Ascending aorta (tissue), 2 donors: ENCODE measurements at regions of chr16 and their contacts with region 1.

Region 1: DNA sequence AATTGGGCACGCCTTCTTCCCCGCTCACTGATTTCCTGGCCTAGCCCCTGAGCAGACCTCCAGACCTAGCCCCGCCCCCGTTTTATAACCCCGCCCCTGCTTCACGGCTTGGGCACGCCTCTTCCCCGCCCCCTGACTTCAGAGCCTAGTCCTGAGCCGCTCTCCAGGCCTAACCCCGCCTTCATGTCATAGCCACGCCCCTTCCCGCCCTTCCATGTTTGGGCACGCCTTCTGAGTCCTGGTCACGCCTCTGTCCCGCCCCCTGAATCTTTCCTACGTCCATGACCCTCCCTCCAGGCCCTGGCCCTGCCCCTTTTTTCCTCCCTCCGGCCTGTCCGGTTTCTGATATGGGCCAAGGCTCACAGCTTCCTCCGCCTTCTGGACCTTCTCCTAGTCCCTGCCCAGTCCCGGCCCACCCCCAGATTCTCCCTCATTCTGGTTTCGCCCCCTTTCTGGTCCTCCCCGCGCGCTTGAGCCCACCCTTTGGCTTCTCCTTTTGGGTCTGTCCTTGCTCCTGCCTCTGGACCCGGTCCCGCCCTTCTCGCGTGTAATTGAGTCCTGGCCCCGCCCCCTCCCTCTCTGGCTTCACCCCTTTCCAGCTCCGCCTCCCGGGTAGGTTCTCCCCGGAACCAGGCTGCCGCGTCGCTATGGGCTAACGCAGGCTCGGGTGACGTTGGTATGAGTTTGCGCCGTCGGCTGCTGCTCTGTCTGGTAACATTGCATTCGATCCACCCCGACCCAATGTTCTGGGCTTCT is 15.1 kb upstream of the EEF2K start:
- DNase-seq: peak; percentile 99 to 100
- H3K4me3 ChIP-seq: peak overlapping the region; percentile 58 to 64
- H3K27ac ChIP-seq: peak overlapping the region; percentile 95 to 98
- H3K4me1 ChIP-seq: peaks cover 9 to 20% of the 10 kb centered on the region in 2 donors
- H3K27me3 ChIP-seq: no peaks in the 10 kb centered on the region
- CTCF ChIP-seq: no peak

Region 2: DNA sequence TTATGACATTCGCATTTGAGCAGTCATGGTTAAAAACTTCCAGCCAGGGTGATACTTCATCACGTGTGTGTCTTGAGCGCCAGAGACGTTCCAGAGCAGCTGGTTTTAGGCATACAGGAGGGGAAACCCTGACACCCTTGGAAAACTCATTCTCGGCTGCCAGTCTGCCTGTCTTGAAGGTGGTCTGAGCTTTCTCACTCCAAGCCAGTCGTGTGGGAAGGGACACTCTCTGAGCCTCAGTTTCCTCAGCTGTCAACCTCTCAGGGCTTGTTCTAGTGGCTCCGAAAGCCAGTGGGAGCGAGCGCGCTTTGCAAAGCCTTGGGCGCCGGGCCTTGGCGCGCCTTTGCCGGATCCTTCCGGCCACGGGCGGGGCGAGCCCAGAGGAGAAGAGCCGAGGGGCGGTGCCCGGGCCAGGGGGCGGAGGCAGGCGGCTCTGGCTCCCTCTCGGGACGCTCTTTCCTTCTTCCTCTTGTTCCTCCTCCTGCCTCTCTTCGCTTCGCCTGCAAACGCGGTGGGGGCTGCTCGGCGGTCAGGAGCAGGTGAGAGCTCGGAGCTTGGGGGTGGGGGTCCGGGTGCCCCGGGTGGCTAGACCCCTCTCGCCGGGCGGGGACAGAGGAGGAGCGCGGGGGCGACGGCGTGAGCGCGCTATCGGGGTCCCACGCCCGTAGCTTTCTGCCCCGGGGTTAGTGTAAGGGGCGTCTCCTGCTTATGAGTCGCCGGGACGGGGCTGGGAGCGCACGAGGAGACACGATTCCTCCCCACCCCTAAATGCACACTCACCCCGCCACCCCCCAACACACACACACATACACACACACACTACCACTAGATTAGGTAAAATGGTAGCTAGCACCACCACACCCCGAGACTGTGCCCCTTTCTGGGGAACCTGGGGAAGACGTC is 1032.5 kb before region 1 on chr16 and contains the start of gene LDAF1:
- intact Hi-C with region 1: loop called (anchors 10 kb)
- DNase-seq: peak; percentile 28 to 91
- H3K4me3 ChIP-seq: peak within 1 kb of the TSS; percentile 85 to 87
- H3K27ac ChIP-seq: peak within 1 kb of the TSS; percentile 87 to 91
- H3K4me1 ChIP-seq: peaks cover 15 to 22% of the 10 kb centered on the region in 2 donors
- H3K27me3 ChIP-seq: no peaks in the 10 kb centered on the region
- CTCF ChIP-seq: no peak
- total RNA-seq, gene LDAF1: 23.5 TPM

Region 3: GRCh38 chr16:21952793-21953540 is 238.0 kb before region 1 on chr16 and contains the start of gene UQCRC2:
- intact Hi-C with region 1: loop called (anchors 1 kb)
- DNase-seq: peak; percentile 48 to 92
- H3K4me3 ChIP-seq: peak within 1 kb of the TSS; percentile 84 to 87
- H3K27ac ChIP-seq: peak within 1 kb of the TSS; percentile 92 to 94
- H3K4me1 ChIP-seq: peaks cover 6 to 20% of the 10 kb centered on the region in 2 donors
- H3K27me3 ChIP-seq: no peaks in the 10 kb centered on the region
- CTCF ChIP-seq: peak in 1 of 3 experiments; percentile 2
- total RNA-seq, gene UQCRC2: 66.3 TPM

Region 4: GRCh38 chr16:22206013-22206841 is 15.3 kb after region 1 on chr16 and contains the start of gene EEF2K:
- intact Hi-C with region 1: loop called (anchors 1 kb)
- DNase-seq: peak; percentile 79 to 97
- H3K4me3 ChIP-seq: peak within 1 kb of the TSS; percentile 74 to 85
- H3K27ac ChIP-seq: peak within 1 kb of the TSS; percentile 87 to 88
- H3K4me1 ChIP-seq: peaks cover 3 to 44% of the 10 kb centered on the region in 2 donors
- H3K27me3 ChIP-seq: no peaks in the 10 kb centered on the region
- CTCF ChIP-seq: peak; percentile 70 to 98 (median 84)
- total RNA-seq, gene EEF2K: 31.9 TPM

Region 5: DNA sequence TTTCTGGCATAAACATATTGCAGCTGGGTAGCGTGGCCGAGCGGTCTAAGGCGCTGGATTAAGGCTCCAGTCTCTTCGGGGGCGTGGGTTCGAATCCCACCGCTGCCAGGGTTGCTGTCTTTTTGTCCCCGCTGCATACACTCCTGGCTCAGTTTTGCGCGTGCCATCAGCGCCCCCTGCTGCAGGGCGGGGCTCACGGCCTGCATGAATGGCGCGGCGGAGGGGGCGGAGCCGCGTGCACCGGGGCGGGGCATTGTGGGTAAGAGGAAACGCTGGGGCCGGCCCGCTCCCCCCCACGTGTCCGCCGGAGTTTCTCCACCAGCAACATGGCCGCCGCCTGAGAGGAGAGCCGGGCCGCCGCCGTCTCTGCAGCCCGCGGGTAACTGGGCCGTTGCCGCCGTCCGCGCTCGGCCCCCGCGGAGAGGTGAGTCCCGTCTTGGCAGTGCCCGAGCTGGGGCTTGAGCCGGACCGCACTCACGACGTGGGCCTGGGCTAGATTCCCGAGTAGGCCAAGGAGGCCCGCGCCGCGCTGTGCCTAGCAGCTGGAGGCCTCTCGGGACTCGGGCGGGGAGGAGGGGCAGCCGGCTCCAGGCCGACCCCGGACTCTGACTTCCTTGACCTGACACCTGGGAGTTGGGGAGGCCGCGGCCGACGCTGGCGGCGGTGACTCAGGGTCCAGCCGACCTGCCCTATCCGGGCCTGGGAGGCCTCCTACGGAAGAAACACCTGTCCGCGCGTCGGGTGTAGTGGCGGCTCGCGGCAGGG is 106.3 kb after region 1 on chr16 and contains the start of gene POLR3E:
- intact Hi-C with region 1: loop called (anchors 2 kb)
- DNase-seq: peak; percentile 98 to 100
- H3K4me3 ChIP-seq: peak within 1 kb of the TSS; percentile 83 to 93
- H3K27ac ChIP-seq: peak within 1 kb of the TSS; percentile 94 to 97
- H3K4me1 ChIP-seq: peaks cover 3% of the 10 kb centered on the region in 2 donors
- H3K27me3 ChIP-seq: no peaks in the 10 kb centered on the region
- CTCF ChIP-seq: peak; percentile 93 to 99 (median 94)
- total RNA-seq, gene POLR3E: 19.5 TPM

Region 6: DNA sequence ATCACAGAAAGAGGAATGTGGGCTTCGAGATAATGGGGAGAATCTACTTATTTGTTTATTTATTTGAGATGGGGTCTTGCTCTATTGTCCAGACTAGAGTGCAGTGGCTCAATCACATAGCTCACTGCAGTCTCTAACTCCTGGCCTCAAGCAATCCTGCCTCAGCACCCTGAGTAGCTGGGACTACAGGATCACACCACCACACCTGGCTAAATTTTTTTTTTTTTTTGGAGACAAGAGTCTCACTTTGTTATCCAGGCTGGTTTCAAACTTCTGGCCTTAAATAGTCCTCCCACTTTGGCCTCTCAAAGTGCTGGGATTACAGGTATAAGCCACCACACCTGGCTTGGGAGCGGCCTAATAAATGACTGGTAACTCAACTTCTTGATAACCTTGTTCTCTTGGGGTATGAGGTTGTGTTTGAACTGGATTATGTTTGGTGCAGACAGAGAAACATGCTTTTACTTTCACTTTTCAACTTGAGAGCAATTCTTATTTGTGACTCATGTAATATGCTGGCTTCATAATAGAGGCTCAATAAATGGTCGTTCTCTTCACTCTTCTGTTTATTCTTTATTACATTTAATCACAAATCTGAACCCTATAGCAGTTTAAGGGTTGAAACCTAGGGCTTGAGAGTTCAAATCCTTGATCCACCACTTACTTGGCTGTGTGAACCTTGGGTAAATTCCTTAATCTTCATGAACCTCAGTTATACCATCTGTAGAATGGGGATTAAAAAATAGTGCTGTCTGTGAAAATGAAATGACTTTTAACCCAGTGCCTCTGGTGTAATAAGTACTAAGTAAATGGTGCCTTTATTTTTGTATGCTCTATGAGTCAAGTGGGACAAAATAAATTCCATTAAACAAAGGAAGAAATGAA is 493.9 kb after region 1 on chr16:
- intact Hi-C with region 1: loop called (anchors 2 kb)
- DNase-seq: peak in 1 of 2 donors; percentile 64
- H3K4me3 ChIP-seq: no peak overlapping the region
- H3K27ac ChIP-seq: peak overlapping the region; percentile 67 to 71
- H3K4me1 ChIP-seq: peaks cover 7 to 16% of the 10 kb centered on the region in 2 donors
- H3K27me3 ChIP-seq: no peaks in the 10 kb centered on the region
- CTCF ChIP-seq: no peak

Region 7: DNA sequence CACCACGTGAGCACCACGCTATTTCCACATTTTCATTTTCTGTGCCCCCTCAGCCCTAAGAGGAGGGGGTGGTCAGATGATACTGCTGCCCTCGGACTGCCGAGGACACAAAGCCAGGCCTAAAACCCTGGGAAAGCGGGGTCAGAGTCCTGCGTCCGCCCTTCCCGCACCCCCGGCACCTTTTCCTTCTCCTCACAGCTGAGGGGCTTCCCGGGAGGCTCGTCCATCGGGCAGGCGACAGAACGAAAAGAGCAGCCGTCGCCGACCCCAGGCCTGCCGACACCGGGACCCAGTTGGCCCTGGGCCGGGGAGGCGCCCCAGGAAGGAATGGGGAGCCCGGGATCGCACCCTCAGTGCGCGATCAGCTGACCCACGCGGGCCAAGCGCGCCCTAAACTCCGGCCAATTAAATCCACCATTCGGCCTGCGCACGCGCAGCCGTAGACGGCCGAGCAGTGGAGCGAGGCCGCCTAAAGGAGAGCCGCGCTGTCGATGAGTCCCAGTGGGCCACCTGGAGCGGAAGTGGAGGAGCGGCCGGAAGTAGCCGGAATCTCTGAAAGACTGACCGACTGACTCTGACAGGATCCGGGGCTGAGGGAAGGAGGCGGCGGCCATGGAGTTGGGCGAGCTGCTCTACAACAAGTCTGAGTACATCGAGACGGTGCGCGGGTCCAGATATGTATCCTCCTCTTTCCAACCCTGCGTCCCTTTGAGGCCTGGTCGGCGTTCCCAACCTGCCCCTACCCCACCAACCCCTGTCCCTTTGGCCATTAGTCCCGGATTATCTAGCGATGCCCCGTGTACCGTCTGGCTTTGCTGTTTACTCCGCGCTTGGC is 1450.2 kb after region 1 on chr16 and contains the starts of genes DCTN5 and PALB2:
- intact Hi-C with region 1: loop called (anchors 10 kb)
- DNase-seq: peak; percentile 80 to 97
- H3K4me3 ChIP-seq: peak within 1 kb of the TSS; percentile 64 to 99
- H3K27ac ChIP-seq: peak within 1 kb of the TSS; percentile 72 to 86
- H3K4me1 ChIP-seq: peaks cover 5 to 18% of the 10 kb centered on the region in 2 donors
- H3K27me3 ChIP-seq: no peaks in the 10 kb centered on the region
- CTCF ChIP-seq: no peak
- total RNA-seq, gene DCTN5: 16.7 TPM
- total RNA-seq, gene PALB2: 2.1 TPM